ENCODE measurements at regions of chr6 and their contacts with region 1.

Region 1: GRCh38 chr6:33812669-33813068 is 8.9 kb upstream of the MLN start:
- DNase-seq: peak; percentile 88
- ATAC-seq: peak; percentile 56
- H3K4me3 Mint-ChIP-seq: peak overlapping the region; percentile 21
- H3K27ac Mint-ChIP-seq: no peak overlapping the region
- H3K4me1 Mint-ChIP-seq: peaks cover 65% of the 10 kb centered on the region
- H3K27me3 Mint-ChIP-seq: peaks cover 12% of the 10 kb centered on the region
- CTCF ChIP-seq: no peak

Region 2: GRCh38 chr6:33781114-33781975 is 31.3 kb before region 1 on chr6:
- CTCF ChIA-PET with region 1: interaction called, 12 read pairs
- POLR2A ChIA-PET with region 1: no interaction called
- DNase-seq: peak; percentile 55
- ATAC-seq: peak; percentile 83
- H3K4me3 Mint-ChIP-seq: 0 out of 2 replicates have a peak overlapping the region, but pooled peaks have one; percentile 20
- H3K27ac Mint-ChIP-seq: peak overlapping the region; percentile 94
- H3K4me1 Mint-ChIP-seq: peaks cover 66% of the 10 kb centered on the region
- H3K27me3 Mint-ChIP-seq: no peaks in the 10 kb centered on the region
- CTCF ChIP-seq: no peak

Region 3: GRCh38 chr6:33794891-33795623 is 17.6 kb before region 1 on chr6:
- CTCF ChIA-PET with region 1: interaction called, 10 read pairs
- POLR2A ChIA-PET with region 1: no interaction called
- DNase-seq: no peak
- ATAC-seq: peak; percentile 36
- H3K4me3 Mint-ChIP-seq: no peak overlapping the region
- H3K27ac Mint-ChIP-seq: peak overlapping the region; percentile 41; the same call in 1 of the 2 replicates
- H3K4me1 Mint-ChIP-seq: peaks cover 72% of the 10 kb centered on the region
- H3K27me3 Mint-ChIP-seq: no peaks in the 10 kb centered on the region; the same call in 1 of the 2 replicates
- CTCF ChIP-seq: no peak

Region 4: DNA sequence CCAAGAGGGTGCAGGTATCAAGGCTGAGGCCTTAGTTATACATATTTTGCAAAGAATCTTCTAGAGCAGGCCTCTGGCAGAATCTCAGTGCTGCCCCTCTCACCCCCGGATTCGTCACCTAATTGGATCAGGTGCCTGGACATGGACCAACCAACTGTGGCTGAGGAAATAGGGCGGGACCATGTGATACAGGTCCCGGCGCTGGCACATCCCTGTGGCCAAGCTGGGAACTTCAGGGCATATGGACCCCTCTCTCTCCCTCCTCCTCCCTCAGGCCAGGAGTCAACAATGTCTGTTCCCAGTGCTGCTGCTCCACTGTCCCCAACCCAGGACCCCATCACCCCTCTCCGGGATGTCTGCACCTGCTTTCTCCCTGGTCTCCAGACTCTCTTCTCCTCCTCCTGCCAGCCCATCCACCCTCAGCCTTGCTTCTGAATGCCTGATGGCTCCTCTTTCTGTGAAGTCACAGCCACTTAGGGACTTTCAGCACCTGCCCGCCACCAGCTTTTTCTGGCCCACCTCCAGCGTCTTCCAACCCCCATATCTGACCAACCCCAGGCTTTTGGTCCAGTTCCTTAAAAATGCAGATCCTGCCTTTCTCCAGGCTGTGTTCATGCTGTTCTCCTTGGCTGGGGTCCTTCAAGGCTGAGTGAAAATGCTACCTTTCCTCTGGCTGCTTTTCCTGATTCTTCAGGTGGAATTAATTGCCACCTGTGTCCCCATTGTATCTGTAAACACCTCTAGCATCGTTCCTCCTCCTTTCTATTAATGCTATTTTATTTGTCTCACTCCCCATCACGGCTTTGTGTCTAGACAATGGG is 10.1 kb after region 1 on chr6:
- CTCF ChIA-PET with region 1: interaction called, 17 read pairs
- POLR2A ChIA-PET with region 1: no interaction called
- DNase-seq: peak; percentile 76
- ATAC-seq: peak; percentile 97
- H3K4me3 Mint-ChIP-seq: no peak overlapping the region
- H3K27ac Mint-ChIP-seq: no peak overlapping the region
- H3K4me1 Mint-ChIP-seq: peaks cover 23% of the 10 kb centered on the region
- H3K27me3 Mint-ChIP-seq: peaks cover under 1% of the 10 kb centered on the region; the same call in 1 of the 2 replicates
- CTCF ChIP-seq: peak; percentile 34; the same call in 1 of the 2 replicates

Region 5: DNA sequence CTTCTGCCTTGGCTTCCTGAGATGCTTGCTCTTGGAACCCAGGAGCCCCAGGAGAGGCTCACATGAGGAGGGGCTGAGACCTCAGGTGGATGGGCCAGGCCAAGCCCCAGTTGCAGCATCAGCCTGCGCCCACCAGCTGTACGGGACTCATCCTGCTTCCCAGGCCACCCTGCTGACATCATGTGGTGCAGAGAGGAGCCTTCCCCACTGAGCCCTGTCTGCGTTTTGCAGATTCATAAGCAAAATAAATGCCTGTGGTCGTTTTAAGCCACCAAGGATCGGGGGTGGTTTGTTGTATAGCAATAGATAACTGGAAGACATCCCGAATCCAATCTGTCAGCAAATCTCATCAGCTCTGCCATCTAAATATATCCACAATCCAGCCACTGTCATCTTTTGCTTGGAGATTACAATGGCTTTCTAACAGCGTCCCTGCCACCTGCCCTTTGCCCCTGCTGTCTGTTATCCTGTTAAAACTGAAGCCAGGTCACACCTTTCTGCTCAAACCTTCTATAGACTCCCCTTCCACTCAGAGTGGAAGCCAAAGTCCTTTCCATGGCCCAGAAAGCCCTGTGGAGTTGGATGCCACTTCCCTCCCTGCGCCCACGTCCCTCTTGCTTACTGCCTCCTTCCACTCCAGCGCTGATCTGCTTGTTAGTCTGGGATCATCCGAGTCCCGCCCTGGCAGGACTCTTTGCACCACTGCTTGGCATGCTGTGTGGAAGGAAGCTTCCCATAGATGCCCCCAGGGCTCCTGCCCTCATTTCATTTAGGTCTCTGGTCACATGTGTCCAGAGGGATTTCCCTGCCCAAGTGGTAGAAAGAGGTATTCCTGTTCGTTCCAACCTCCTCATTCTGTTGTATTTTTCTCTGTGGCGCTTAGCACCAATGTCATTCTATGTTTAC is 15.1 kb after region 1 on chr6:
- CTCF ChIA-PET with region 1: interaction called, 17 read pairs
- POLR2A ChIA-PET with region 1: no interaction called
- DNase-seq: no peak
- ATAC-seq: no peak
- H3K4me3 Mint-ChIP-seq: no peak overlapping the region
- H3K27ac Mint-ChIP-seq: no peak overlapping the region
- H3K4me1 Mint-ChIP-seq: peaks cover 37% of the 10 kb centered on the region
- H3K27me3 Mint-ChIP-seq: peaks cover 16% of the 10 kb centered on the region; the same call in 1 of the 2 replicates
- CTCF ChIP-seq: no peak

Region 6: GRCh38 chr6:33896391-33897183 is 83.9 kb after region 1 on chr6:
- CTCF ChIA-PET with region 1: no interaction called
- POLR2A ChIA-PET with region 1: no interaction called
- DNase-seq: no peak
- ATAC-seq: no peak
- H3K4me3 Mint-ChIP-seq: no peak overlapping the region
- H3K27ac Mint-ChIP-seq: no peak overlapping the region
- H3K4me1 Mint-ChIP-seq: peaks cover 17% of the 10 kb centered on the region
- H3K27me3 Mint-ChIP-seq: no peaks in the 10 kb centered on the region; the same call in 1 of the 2 replicates
- CTCF ChIP-seq: no peak

Region 7: GRCh38 chr6:33994472-33995308 is 182.0 kb after region 1 on chr6:
- CTCF ChIA-PET with region 1: no interaction called
- POLR2A ChIA-PET with region 1: no interaction called
- DNase-seq: no peak
- ATAC-seq: no peak
- H3K4me3 Mint-ChIP-seq: no peak overlapping the region
- H3K27ac Mint-ChIP-seq: no peak overlapping the region
- H3K4me1 Mint-ChIP-seq: peaks cover 11% of the 10 kb centered on the region
- H3K27me3 Mint-ChIP-seq: peaks cover 77% of the 10 kb centered on the region
- CTCF ChIP-seq: no peak

Region 8: DNA sequence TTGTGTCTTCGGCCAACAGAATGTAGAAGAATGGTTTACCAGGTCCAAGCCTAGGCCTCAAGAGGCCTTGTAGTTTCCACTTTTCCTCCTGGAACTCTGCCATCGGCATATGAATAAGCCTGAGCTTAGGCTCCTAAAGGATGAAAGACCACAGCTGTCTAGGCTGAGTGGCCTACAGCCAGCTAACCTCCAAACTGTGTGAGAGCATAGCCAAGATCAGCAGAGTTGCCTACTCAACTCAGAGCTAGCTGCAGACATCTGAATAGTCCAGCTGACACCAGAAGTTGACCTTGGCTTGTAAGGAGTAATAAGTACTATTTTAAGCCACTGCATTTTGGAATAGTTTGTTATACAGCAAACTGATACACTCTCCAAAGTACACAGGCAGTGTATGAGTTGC is 488.7 kb after region 1 on chr6:
- CTCF ChIA-PET with region 1: no interaction called
- POLR2A ChIA-PET with region 1: no interaction called
- DNase-seq: no peak
- ATAC-seq: no peak; the same call in 1 of the 2 replicates
- H3K4me3 Mint-ChIP-seq: no peak overlapping the region
- H3K27ac Mint-ChIP-seq: no peak overlapping the region
- H3K4me1 Mint-ChIP-seq: peaks cover 5% of the 10 kb centered on the region
- H3K27me3 Mint-ChIP-seq: no peaks in the 10 kb centered on the region
- CTCF ChIP-seq: no peak